ENCODE measurements at regions of chr14 and their contacts with region 1.

Region 1: GRCh38 chr14:68824517-68825347 is 31.9 kb upstream of the ZFP36L1 start:
- DNase-seq: peak; percentile 38 to 85
- H3K4me3 ChIP-seq: peak overlapping the region in 1 of 3 donors; percentile 39
- H3K27ac ChIP-seq: no peak overlapping the region
- H3K4me1 ChIP-seq: peaks cover 0 to 1% of the 10 kb centered on the region in 2 donors
- H3K27me3 ChIP-seq: no peaks in the 10 kb centered on the region
- CTCF ChIP-seq: peak; percentile 60 to 77 (median 64)
- POLR2A ChIP-seq: no peak

Region 2: GRCh38 chr14:67934008-67934481 is 890.7 kb before region 1 on chr14:
- intact Hi-C with region 1: loop called (anchors 10 kb)
- DNase-seq: no peak
- H3K4me3 ChIP-seq: no peak overlapping the region
- H3K27ac ChIP-seq: peak overlapping the region; percentile 37 to 72
- H3K4me1 ChIP-seq: no peaks in the 10 kb centered on the region
- H3K27me3 ChIP-seq: no peaks in the 10 kb centered on the region
- CTCF ChIP-seq: peak; percentile 88 to 96 (median 91)
- POLR2A ChIP-seq: no peak